Sigmoid colon (tissue), 7 donors: ENCODE measurements at regions of chr22 and their contacts with region 1.

Region 1: GRCh38 chr22:19143967-19144400 is 467 bp downstream of the ESS2 start:
- DNase-seq: no peak
- H3K4me3 ChIP-seq: peak overlapping the region; percentile 59 to 87 (median 80)
- H3K27ac ChIP-seq: peak overlapping the region; percentile 79 to 85 (median 82)
- H3K4me1 ChIP-seq: peaks cover 0 to 23% (median 14%) of the 10 kb centered on the region in 4 donors
- H3K27me3 ChIP-seq: peaks cover 3 to 14% (median 8%) of the 10 kb centered on the region in 3 donors
- CTCF ChIP-seq: no peak
- EP300 ChIP-seq: no peak
- POLR2A ChIP-seq: no peak

Region 2: GRCh38 chr22:19122143-19122751 is 21.7 kb before region 1 on chr22 and contains the start of gene DGCR2:
- intact Hi-C with region 1: loop called (anchors 2 kb)
- DNase-seq: peak; percentile 98
- H3K4me3 ChIP-seq: peak within 1 kb of the TSS; percentile 81 to 96 (median 90)
- H3K27ac ChIP-seq: peak within 1 kb of the TSS; percentile 93 to 96 (median 94)
- H3K4me1 ChIP-seq: peaks cover 0 to 49% (median 46%) of the 10 kb centered on the region in 4 donors
- H3K27me3 ChIP-seq: no peaks in the 10 kb centered on the region
- CTCF ChIP-seq: no peak
- EP300 ChIP-seq: no peak
- POLR2A ChIP-seq: peak; percentile 14 to 35
- total RNA-seq, gene DGCR2: 25.5 to 36.8 (median 32.7) TPM

Region 3: GRCh38 chr22:19271856-19272535 is 128.0 kb after region 1 on chr22:
- intact Hi-C with region 1: no loop called
- DNase-seq: no peak
- H3K4me3 ChIP-seq: no peak overlapping the region
- H3K27ac ChIP-seq: no peak overlapping the region
- H3K4me1 ChIP-seq: no peaks in the 10 kb centered on the region
- H3K27me3 ChIP-seq: no peaks in the 10 kb centered on the region
- CTCF ChIP-seq: no peak
- EP300 ChIP-seq: no peak
- POLR2A ChIP-seq: no peak

Region 4: DNA sequence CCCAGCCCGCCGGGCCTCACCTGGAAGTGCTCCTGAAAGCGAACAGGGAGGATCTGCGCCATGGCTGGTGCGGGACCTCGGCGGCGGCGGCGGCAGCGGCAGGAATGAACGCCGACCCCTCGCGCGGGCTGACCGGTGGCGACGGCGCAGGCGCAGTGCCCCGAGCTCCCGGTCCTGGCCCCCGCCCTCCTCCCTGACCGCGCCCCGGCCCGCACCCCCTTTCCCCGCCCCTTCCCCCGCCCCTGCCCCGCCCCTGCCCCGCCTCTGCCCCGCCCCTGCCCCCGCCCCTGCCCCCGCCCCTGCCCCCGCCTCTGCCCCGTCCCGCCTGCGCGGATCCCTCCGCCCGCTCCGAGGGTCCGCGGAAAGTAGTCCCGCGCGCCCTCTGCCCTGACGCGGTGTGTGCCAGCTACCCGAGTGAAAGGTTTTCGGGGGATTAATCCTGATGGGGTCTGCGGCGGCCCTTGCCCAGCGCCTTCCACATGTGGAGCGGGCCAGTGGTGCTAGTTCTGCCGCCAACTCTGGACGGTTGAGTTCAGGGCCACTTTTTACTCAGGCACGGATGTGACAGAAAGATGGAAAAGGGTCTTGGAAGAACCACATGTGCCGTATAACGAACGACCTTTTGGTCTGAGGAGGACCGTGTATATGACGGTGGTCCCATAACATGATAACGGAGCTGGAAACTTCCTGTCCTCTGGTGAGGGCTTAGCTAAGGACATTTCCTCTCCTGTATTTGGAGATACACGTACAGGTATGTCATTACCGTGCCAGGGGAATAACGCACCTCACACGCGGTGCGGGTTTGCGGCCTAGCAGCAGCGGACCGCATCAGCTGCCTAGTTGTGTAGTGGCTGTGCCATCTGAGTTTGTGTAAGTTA is 147.8 kb after region 1 on chr22 and contains the start of gene CLTCL1:
- intact Hi-C with region 1: loop called (anchors 10 kb)
- DNase-seq: peak; percentile 90
- H3K4me3 ChIP-seq: peak within 1 kb of the TSS; percentile 80 to 95 (median 88)
- H3K27ac ChIP-seq: peak within 1 kb of the TSS; percentile 70 to 82 (median 76)
- H3K4me1 ChIP-seq: peaks cover 0 to 23% (median 13%) of the 10 kb centered on the region in 4 donors
- H3K27me3 ChIP-seq: no peaks in the 10 kb centered on the region
- CTCF ChIP-seq: no peak
- EP300 ChIP-seq: no peak
- POLR2A ChIP-seq: no peak
- total RNA-seq, gene CLTCL1: 2.4 to 5.0 (median 4.0) TPM

Region 5: GRCh38 chr22:19479357-19480172 is 335.6 kb after region 1 on chr22 and contains the start of gene CDC45:
- intact Hi-C with region 1: loop called (anchors 5 kb)
- DNase-seq: peak; percentile 98
- H3K4me3 ChIP-seq: peak within 1 kb of the TSS; percentile 82 to 97 (median 86)
- H3K27ac ChIP-seq: peak within 1 kb of the TSS; percentile 87 to 94 (median 91)
- H3K4me1 ChIP-seq: peaks cover 0 to 35% (median 21%) of the 10 kb centered on the region in 4 donors
- H3K27me3 ChIP-seq: no peaks in the 10 kb centered on the region
- CTCF ChIP-seq: no peak
- EP300 ChIP-seq: no peak
- POLR2A ChIP-seq: no peak
- total RNA-seq, gene CDC45: 0.14 TPM in 1 of 4 donors, not detected in the others

Region 6: DNA sequence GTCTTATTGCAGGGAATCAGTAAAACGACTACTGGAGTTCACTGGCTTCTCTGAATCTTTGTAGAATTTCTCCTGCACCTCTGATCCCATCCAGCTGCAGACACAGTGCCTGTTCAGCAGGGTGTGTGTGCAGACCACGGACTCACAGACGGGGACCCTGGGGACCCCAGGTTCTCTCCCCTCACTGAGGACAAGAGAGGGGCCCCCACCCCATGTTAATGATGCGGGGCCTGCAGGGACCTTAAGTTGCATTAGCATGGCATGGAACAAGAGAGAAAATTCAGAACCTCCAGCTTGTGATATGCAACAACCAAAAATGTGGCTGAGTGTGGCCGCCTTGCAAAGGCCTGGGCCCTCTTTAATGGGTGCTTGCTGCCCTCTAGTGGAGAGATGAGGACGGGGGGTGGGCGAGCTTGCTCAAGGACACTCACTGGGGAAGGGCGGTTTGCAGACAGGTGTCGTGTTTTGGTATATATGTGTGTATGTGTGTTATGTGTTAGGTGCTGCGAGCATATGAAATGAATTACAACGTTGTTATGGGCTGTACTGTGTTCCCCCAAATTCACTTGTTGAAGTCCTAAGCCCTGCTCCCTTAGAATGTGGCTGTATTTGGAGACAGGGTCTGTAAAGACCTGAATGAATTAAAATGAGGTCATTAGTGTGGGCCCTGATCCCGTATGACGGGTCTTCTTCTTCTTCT is 485.9 kb after region 1 on chr22:
- intact Hi-C with region 1: loop called (anchors 2 kb)
- DNase-seq: peak; percentile 83
- H3K4me3 ChIP-seq: no peak overlapping the region
- H3K27ac ChIP-seq: no peak overlapping the region
- H3K4me1 ChIP-seq: no peaks in the 10 kb centered on the region
- H3K27me3 ChIP-seq: peaks cover 0 to 46% (median 4%) of the 10 kb centered on the region in 3 donors
- CTCF ChIP-seq: peak; percentile 62 to 79 (median 74)
- EP300 ChIP-seq: no peak
- POLR2A ChIP-seq: no peak